ENCODE measurements at regions of chr12 and their contacts with region 1.

Region 1: GRCh38 chr12:109428037-109428629 is 49.0 kb downstream of the KCTD10 start:
- DNase-seq: no peak
- H3K4me3 ChIP-seq: no peak overlapping the region
- H3K27ac ChIP-seq: no peak overlapping the region
- H3K4me1 ChIP-seq: peaks cover 8 to 13% (median 10%) of the 10 kb centered on the region in 4 donors
- H3K27me3 ChIP-seq: peaks cover 0 to 2% (median 0%) of the 10 kb centered on the region in 4 donors
- CTCF ChIP-seq: peak; percentile 92 to 98 (median 96)
- EP300 ChIP-seq: no peak
- POLR2A ChIP-seq: no peak

Region 2: DNA sequence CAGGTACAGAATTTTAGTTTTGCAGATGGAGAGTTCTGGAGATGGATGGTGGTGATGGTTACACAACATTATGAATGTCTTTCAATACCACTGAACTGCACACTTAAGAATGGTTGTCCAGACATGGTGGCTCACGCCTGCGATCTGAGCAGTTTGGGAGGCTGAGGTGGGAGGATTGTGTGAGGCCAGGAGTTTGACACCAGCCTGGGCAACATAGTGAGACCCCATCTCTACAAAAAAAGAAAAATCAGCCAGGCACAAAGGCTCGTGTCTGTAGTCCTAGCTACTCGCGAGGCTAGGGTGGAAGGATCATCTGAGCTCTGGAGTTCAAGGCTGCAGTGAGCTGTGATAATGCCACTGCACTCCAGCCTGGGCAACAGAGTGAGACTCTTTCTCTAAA is 383.9 kb before region 1 on chr12:
- intact Hi-C with region 1: no loop called
- DNase-seq: peak; percentile 55
- H3K4me3 ChIP-seq: no peak overlapping the region
- H3K27ac ChIP-seq: no peak overlapping the region
- H3K4me1 ChIP-seq: no peaks in the 10 kb centered on the region
- H3K27me3 ChIP-seq: peaks cover 0 to 23% (median 0%) of the 10 kb centered on the region in 4 donors
- CTCF ChIP-seq: no peak
- EP300 ChIP-seq: no peak
- POLR2A ChIP-seq: no peak

Region 3: DNA sequence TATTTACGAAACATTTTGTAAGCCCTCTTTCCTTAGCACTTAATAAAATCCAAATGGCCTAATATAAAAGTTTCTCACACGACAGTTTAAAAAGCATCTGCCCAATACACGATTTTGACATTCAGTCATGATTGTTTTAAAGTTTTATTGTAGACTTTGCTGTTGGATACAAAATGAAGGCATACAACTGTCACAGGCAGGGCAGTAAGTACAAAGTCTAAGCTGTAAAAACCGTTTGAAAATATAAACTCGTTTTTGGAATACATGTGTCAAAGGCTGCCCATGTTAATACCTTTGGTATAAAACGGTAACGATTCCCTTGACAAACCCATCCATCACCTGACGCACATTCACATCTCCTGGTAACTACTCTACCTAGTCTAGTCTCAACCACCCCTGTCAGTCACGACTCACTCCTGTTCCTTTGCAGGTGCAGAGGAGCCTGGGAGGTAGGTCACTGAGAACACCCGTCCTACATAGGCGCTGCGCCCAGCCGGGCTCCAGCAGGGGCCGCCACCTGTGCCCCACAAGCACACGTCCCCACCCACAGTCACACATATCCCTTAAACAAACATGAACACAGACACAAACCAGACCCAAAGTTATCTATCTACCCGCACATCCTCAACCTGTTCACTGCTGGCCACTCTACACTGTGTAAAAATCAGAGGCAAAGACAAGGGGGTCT is 21.9 kb after region 1 on chr12:
- intact Hi-C with region 1: no loop called
- DNase-seq: no peak
- H3K4me3 ChIP-seq: no peak overlapping the region
- H3K27ac ChIP-seq: peak overlapping the region; percentile 22 to 68 (median 48)
- H3K4me1 ChIP-seq: peaks cover 3 to 70% (median 40%) of the 10 kb centered on the region in 4 donors
- H3K27me3 ChIP-seq: no peaks in the 10 kb centered on the region
- CTCF ChIP-seq: peak in 2 of 3 experiments; percentile 27 to 30
- EP300 ChIP-seq: no peak
- POLR2A ChIP-seq: no peak

Region 4: DNA sequence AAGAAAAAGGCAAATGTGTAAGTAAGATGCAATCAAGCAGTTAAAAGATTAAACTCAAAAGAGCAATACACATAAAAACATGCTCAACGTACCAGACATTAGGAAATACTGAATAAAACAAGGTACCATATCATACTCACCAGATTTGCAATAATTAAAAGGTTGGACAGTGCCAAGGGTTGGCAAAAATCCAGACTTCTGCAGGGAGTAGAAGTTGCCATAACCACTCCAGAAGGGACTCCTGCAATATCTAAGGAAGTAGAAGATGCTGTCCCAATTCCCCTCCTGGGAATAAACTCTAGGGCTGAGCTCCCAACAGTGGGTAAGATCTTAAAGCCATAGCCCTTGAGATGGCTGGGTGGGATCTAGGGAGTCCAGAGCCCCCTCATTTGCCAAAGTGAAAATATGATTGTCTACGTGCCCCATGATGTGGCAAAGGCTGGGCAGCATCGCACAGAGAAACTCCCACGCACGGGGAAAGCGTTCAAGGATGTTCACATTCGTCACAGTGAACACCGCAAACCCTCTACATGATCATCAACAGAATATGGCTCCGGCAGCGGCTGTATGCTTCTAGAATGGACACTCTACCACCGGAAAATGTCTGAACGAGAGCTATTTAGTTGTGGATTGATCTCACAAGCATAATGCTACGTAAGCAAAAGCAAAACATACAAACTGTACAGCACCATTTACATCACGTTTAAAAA is 36.7 kb after region 1 on chr12:
- intact Hi-C with region 1: no loop called
- DNase-seq: no peak
- H3K4me3 ChIP-seq: no peak overlapping the region
- H3K27ac ChIP-seq: peak overlapping the region; percentile 91 to 98 (median 96)
- H3K4me1 ChIP-seq: peaks cover 96 to 100% (median 98%) of the 10 kb centered on the region in 4 donors
- H3K27me3 ChIP-seq: no peaks in the 10 kb centered on the region
- CTCF ChIP-seq: no peak
- EP300 ChIP-seq: no peak
- POLR2A ChIP-seq: no peak

Region 5: GRCh38 chr12:109477185-109477962 is 49.2 kb after region 1 on chr12 and contains the starts of genes KCTD10 and UBE3B:
- intact Hi-C with region 1: loop called (anchors 2 kb)
- DNase-seq: peak; percentile 97
- H3K4me3 ChIP-seq: peak within 1 kb of the TSS; percentile 78 to 95 (median 85)
- H3K27ac ChIP-seq: peak within 1 kb of the TSS; percentile 93 to 99 (median 96)
- H3K4me1 ChIP-seq: peaks cover 45 to 69% (median 62%) of the 10 kb centered on the region in 4 donors
- H3K27me3 ChIP-seq: no peaks in the 10 kb centered on the region
- CTCF ChIP-seq: peak in 1 of 3 experiments; percentile 29
- EP300 ChIP-seq: no peak
- POLR2A ChIP-seq: peak; percentile 41
- total RNA-seq, gene KCTD10: 90.7 to 115 (median 104) TPM
- total RNA-seq, gene UBE3B: 42.4 to 59.2 (median 49.1) TPM

Region 6: GRCh38 chr12:109488051-109488665 is 60.0 kb after region 1 on chr12:
- intact Hi-C with region 1: no loop called
- DNase-seq: no peak
- H3K4me3 ChIP-seq: no peak overlapping the region
- H3K27ac ChIP-seq: no peak overlapping the region
- H3K4me1 ChIP-seq: no peaks in the 10 kb centered on the region
- H3K27me3 ChIP-seq: no peaks in the 10 kb centered on the region
- CTCF ChIP-seq: no peak
- EP300 ChIP-seq: no peak
- POLR2A ChIP-seq: no peak

Measured in esophagus muscularis mucosa (tissue), 4 donors.